Activated CD8-positive, alpha-beta T cell treated with anti-CD3 and anti-CD28 coated beads, Interleukin-2, amount 10 ng/mL, durations not matched to agents 7 days and 5 days (primary cell): ENCODE measurements at regions of chr12 and their contacts with region 1.

Region 1: DNA sequence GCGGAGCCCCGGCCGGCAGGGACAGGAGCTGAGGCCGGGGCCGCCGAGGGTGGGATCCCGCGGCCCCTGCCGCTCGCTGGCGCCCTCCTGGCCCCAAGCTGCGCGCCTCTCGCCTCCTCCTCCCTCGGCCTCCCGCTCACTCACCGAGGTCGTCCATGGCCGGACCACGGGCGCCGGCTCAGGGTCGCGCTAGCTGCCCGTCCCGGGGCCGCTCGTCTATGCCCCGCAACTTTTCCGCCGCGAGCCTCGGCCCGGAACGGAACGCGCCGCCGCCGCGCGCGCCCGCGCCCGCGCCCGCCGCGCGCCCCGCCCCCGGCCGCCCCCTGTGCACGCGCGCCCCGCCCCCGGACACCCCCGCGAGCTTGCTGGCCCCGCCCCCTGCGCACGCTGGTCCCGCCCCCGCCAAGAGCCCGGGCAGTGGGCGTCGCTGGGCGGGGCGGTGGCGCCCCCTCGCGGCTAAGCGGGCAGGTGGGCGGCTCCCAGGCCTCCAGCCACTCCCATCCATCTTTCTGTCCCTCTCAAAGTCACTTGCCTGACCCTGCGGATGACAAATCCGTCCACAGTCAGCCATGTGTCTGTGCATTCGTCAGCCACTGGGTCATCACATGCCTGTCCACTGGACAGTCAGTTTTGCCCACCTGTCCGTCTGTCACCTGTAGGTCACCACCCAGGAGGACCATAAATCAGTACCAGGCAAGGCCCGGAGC is at the start of gene PXN:
- DNase-seq: peak; percentile 92
- ATAC-seq: peak; percentile 92
- H3K4me3 Mint-ChIP-seq: peak within 1 kb of the TSS; percentile 81
- H3K27ac Mint-ChIP-seq: peak within 1 kb of the TSS; percentile 77
- H3K4me1 Mint-ChIP-seq: peaks cover 47% of the 10 kb centered on the region
- H3K27me3 Mint-ChIP-seq: no peaks in the 10 kb centered on the region
- total RNA-seq, gene PXN: 123 to 127 TPM

Region 2: GRCh38 chr12:120200364-120200800 is 65.2 kb before region 1 on chr12:
- CTCF ChIA-PET with region 1: interaction called, 45 read pairs
- POLR2A ChIA-PET with region 1: interaction called, 41 read pairs
- DNase-seq: no peak
- ATAC-seq: no peak
- H3K4me3 Mint-ChIP-seq: peak overlapping the region; percentile 89
- H3K27ac Mint-ChIP-seq: peak overlapping the region; percentile 98
- H3K4me1 Mint-ChIP-seq: peaks cover 46% of the 10 kb centered on the region
- H3K27me3 Mint-ChIP-seq: no peaks in the 10 kb centered on the region

Region 3: GRCh38 chr12:120228291-120229070 is 37.1 kb before region 1 on chr12:
- CTCF ChIA-PET with region 1: interaction called, 922 read pairs
- POLR2A ChIA-PET with region 1: interaction called, 42 read pairs
- DNase-seq: peak; percentile 91
- ATAC-seq: peak; percentile 83
- H3K4me3 Mint-ChIP-seq: peak overlapping the region; percentile 40
- H3K27ac Mint-ChIP-seq: peak overlapping the region; percentile 85
- H3K4me1 Mint-ChIP-seq: peaks cover 90% of the 10 kb centered on the region
- H3K27me3 Mint-ChIP-seq: no peaks in the 10 kb centered on the region

Region 4: GRCh38 chr12:120242275-120242799 is 23.3 kb before region 1 on chr12:
- CTCF ChIA-PET with region 1: interaction called, 81 read pairs
- POLR2A ChIA-PET with region 1: interaction called, 3 read pairs
- DNase-seq: no peak
- ATAC-seq: no peak
- H3K4me3 Mint-ChIP-seq: no peak overlapping the region
- H3K27ac Mint-ChIP-seq: no peak overlapping the region
- H3K4me1 Mint-ChIP-seq: peaks cover 40% of the 10 kb centered on the region
- H3K27me3 Mint-ChIP-seq: peaks cover 2% of the 10 kb centered on the region

Region 5: DNA sequence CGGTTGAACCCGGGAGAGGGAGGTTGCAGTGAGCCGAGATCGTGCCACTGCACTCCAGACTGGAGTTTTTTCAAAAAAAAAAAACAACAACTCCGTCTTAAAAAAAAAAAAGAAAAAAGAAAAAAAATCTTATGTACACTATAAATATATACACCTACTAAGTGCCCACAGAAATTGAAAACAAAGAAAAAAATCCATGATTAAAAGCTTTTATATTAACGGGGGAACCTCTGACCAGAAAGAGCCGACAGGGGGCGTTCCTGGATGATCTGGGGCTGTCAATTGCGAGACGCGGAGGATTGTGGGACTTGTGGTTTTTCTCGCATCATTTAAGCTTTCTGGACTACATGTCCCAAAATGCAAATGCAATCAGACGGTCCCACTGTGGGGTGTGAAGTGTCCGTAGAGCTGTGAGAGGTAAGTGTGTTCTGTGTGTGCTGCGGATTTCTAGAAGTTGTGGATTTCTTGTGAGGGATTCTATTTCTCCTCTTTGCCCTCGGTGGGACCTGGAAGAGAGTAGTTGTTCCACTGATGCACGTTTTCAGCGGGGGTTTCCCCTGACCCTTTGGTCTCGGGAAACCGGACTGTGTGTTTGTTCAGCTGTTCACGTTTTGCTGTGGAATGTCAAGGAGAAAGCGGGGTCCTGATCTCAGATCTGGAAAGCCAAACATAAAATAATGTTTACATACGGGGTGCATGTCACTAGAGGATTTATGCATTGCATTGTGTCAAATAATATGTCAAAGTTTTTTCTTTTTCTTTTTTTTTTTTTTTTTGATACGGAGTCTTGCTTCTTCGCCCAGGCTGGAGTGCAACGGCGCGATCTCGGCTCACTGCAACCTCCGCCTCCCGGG is 36.6 kb after region 1 on chr12 and contains the start of gene SIRT4:
- CTCF ChIA-PET with region 1: interaction called, 10 read pairs
- POLR2A ChIA-PET with region 1: no interaction called
- DNase-seq: peak; percentile 96
- ATAC-seq: peak; percentile 99
- H3K4me3 Mint-ChIP-seq: peak within 1 kb of the TSS; percentile 90
- H3K27ac Mint-ChIP-seq: peak within 1 kb of the TSS; percentile 78
- H3K4me1 Mint-ChIP-seq: peaks cover 9% of the 10 kb centered on the region
- H3K27me3 Mint-ChIP-seq: no peaks in the 10 kb centered on the region
- total RNA-seq, gene SIRT4: 1.2 to 1.4 TPM